Activated CD8-positive, alpha-beta T cell treated with anti-CD3 and anti-CD28 coated beads for 36 hours (primary cell): ENCODE measurements at regions of chr1 and their contacts with region 1.

Region 1: GRCh38 chr1:66446261-66447001 is 87.5 kb upstream of the SGIP1 start:
- DNase-seq: peak; percentile 31
- ATAC-seq: peak; percentile 66
- H3K4me3 Mint-ChIP-seq: peak overlapping the region; percentile 68
- H3K27ac Mint-ChIP-seq: peak overlapping the region; percentile 96
- H3K4me1 Mint-ChIP-seq: peaks cover 23% of the 10 kb centered on the region
- H3K27me3 Mint-ChIP-seq: peaks cover 9% of the 10 kb centered on the region
- CTCF ChIP-seq: peak; percentile 77

Region 2: DNA sequence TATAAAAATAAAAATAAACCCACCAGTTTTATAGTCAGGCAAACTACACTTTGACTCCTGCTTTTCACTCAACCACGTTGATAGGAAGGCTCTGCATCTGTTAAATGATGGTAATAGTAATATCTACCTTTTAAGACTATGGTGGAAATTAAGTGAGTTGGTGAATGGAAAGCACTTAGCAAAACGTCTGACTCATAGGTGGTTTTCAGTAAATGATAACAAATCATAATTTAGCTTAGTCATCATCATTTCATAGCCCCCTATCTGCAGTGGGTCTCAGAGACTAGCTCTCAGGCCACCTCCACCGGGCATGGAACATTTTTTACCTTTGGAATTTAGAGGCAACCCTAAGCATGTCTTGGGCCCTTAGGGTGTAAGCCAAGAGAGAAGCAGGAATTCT is 493.7 kb before region 1 on chr1:
- CTCF ChIA-PET with region 1: interaction called, 37 read pairs
- POLR2A ChIA-PET with region 1: no interaction called
- intact Hi-C with region 1: no loop called
- DNase-seq: no peak
- ATAC-seq: peak; percentile 39
- H3K4me3 Mint-ChIP-seq: no peak overlapping the region
- H3K27ac Mint-ChIP-seq: no peak overlapping the region
- H3K4me1 Mint-ChIP-seq: peaks cover 9% of the 10 kb centered on the region
- H3K27me3 Mint-ChIP-seq: peaks cover 1% of the 10 kb centered on the region
- CTCF ChIP-seq: no peak

Region 3: GRCh38 chr1:66262211-66262963 is 184.0 kb before region 1 on chr1:
- CTCF ChIA-PET with region 1: interaction called, 512 read pairs
- POLR2A ChIA-PET with region 1: interaction called, 4 read pairs
- intact Hi-C with region 1: no loop called
- DNase-seq: no peak
- ATAC-seq: no peak
- H3K4me3 Mint-ChIP-seq: no peak overlapping the region
- H3K27ac Mint-ChIP-seq: no peak overlapping the region
- H3K4me1 Mint-ChIP-seq: peaks cover 69% of the 10 kb centered on the region
- H3K27me3 Mint-ChIP-seq: no peaks in the 10 kb centered on the region
- CTCF ChIP-seq: no peak

Region 4: DNA sequence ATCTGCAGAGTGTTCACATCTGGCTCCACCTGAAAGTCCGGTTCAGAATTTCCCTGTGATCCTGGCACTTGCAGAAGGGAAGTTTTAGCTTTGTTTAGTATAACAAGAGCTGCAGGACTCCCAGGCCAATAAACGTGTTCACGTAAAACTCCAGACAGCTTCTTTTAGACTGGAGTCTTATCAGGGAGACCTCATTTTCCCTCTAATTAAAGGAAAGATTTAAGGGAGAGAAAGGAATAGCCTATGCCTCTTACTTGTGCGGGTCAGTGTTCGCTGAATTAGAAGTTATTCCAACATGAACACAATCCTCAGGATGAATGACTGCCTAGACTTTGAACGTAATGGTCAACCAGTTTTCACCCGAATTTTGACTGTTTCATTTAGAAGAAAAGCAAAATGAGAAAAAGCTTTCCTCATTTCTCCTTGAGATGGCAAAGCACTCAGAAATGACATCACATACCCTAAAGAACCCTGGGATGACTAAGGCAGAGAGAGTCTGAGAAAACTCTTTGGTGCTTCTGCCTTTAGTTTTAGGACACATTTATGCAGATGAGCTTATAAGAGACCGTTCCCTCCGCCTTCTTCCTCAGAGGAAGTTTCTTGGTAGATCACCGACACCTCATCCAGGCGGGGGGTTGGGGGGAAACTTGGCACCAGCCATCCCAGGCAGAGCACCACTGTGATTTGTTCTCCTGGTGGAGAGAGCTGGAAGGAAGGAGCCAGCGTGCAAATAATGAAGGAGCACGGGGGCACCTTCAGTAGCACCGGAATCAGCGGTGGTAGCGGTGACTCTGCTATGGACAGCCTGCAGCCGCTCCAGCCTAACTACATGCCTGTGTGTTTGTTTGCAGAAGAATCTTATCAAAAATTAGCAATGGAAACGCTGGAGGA is 114.5 kb before region 1 on chr1:
- CTCF ChIA-PET with region 1: interaction called, 46 read pairs
- POLR2A ChIA-PET with region 1: interaction called, 53 read pairs
- intact Hi-C with region 1: loop called (anchors 2 kb)
- DNase-seq: peak; percentile 70
- ATAC-seq: peak; percentile 16
- H3K4me3 Mint-ChIP-seq: peak overlapping the region; percentile 99
- H3K27ac Mint-ChIP-seq: peak overlapping the region; percentile 98
- H3K4me1 Mint-ChIP-seq: peaks cover 48% of the 10 kb centered on the region
- H3K27me3 Mint-ChIP-seq: no peaks in the 10 kb centered on the region
- CTCF ChIP-seq: no peak

Region 5: DNA sequence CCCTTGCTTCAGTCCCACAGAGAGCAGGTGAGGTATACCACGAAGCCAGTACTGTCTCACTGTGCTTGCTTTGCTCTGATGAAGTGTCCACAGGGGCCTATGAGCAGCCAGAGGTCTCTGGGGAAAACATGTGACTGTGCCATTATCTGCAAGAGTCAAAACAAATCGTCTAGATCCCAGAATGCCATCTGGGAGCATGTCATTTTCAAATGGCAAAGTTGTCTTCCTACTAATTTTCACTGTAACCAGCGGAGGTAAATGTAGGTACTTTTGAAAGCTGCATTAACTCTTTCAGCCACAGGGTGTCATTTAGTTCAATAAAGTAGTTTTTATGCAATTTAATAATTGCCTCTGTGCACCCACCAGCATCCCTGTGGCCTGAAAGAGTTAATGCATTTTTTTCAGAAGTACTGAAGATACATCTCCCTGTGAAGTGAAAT is 86.1 kb before region 1 on chr1:
- CTCF ChIA-PET with region 1: interaction called, 101 read pairs
- POLR2A ChIA-PET with region 1: interaction called, 7 read pairs
- intact Hi-C with region 1: no loop called
- DNase-seq: peak; percentile 22
- ATAC-seq: peak; percentile 41
- H3K4me3 Mint-ChIP-seq: no peak overlapping the region
- H3K27ac Mint-ChIP-seq: no peak overlapping the region
- H3K4me1 Mint-ChIP-seq: peaks cover 88% of the 10 kb centered on the region
- H3K27me3 Mint-ChIP-seq: no peaks in the 10 kb centered on the region
- CTCF ChIP-seq: peak; percentile 79

Region 6: DNA sequence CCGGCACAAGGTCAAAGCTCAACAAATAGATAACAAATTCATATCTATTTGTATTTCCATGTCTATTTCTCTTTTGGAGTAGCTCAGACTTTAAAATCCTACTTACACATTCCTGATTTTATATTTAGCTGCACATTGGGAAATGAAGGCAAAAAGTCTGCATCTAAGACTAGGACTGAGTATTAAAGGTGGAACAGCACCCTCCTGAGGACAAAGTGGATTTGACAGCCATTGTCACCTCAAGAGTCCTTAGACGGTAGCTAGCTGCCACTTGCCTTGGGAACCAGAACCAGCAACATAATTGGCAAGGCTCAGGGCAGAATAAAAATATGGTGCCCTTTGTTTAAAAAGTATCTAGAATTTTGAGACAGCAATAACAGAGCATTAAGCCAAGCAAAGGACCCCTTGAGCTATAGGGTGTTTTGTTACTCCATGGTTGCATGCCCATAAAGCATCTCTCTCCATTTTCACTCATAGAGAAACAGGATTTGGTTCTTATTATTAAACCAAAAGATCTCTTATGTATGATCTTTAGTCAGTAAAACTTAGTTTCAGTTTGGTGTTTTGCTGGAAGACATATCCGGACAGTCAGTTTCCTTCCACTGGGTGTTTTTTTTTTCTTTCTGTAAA is 57.5 kb after region 1 on chr1:
- CTCF ChIA-PET with region 1: interaction called, 19 read pairs
- POLR2A ChIA-PET with region 1: no interaction called
- intact Hi-C with region 1: no loop called
- DNase-seq: peak; percentile 70
- ATAC-seq: peak; percentile 74
- H3K4me3 Mint-ChIP-seq: no peak overlapping the region
- H3K27ac Mint-ChIP-seq: no peak overlapping the region
- H3K4me1 Mint-ChIP-seq: no peaks in the 10 kb centered on the region
- H3K27me3 Mint-ChIP-seq: peaks cover 11% of the 10 kb centered on the region
- CTCF ChIP-seq: peak; percentile 80